ENCODE measurements at regions of chr20 and their contacts with region 1.

Region 1: DNA sequence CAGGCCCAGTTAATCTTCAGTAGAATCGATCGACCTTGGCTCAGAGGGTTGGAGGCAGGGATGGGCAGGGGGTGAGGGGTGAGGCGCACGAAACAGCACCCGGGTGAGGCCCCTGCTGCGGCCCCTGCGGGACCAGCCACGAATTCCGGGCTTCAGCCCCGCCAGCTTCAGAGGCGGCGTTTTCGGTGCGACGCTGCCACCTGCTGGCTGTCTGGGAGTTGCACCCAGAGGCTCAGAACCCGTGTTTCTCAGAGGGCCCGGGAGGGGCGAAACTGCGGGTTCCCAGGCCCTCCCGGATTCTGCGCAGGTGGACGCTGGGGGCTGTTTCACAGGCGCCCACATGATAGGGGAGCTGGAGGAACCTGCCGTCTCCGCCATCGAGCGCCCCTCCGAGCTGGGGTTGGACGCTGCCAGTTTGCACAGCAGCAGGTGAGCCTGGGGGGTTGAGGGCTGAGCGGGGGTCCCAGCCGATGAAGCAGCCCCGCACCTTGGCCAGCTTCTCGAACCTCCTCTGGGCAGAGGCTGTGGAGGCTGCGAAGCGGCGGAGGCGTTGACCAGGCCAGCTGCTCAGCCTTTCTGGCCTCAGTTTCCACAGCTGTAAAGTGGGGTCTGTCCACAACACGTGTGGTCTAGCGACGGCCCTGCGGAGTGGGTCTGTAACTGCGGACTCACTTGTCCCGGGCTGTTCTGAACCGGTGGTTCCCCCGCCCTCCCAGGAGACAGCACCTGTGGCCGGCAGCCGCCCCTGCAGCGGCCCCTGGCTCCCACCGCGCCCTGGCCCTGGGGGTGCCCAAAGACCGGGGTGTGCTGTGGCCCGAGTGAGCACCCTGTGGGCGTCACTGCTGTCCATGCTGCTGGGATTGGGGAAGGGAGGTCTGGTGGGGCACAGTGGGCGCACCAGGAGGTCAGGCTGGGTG is 2.5 kb upstream of the BHLHE23 start:
- DNase-seq: peak; percentile 95
- H3K4me3 Mint-ChIP-seq: peak overlapping the region; percentile 53
- H3K27ac Mint-ChIP-seq: peak overlapping the region; percentile 51
- H3K4me1 Mint-ChIP-seq: peaks cover 7% of the 10 kb centered on the region
- H3K27me3 Mint-ChIP-seq: peaks cover 67% of the 10 kb centered on the region

Region 2: DNA sequence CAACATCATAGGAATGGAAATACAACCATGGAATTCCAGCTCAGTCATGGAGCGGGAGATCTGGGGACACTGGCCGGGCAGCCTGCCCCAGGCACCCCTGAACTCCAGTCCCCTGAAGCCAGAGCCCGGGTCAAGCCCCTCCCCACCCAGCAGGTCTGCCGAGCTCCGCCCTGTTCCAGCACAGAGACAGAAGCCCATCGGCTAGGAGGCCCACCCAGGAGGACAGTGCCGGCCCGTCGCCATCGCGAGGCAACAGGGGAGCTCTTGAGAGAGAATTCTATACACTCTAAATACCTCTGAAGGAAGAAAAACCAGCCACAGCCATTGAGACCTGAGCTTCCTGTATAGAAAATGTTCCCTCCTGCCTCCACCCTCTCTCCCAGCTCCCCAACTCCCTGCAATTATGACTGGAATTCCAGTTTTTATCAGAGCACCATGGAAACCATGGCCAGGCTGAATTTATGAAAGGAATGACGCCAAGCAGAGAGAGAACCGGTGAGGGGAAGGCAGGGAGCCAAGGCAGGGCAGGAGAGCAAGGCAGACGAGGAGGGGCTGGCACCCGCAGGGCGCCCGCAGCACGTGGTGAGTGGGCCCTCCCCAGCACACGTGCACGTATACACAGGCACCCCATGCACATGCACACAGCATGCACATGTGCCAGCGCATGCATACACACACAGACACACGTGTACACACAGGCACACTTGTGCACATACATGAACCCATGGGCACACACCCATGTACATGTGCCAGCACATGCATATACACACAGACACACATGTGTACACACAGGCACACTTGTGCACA is 240.6 kb before region 1 on chr20:
- intact Hi-C with region 1: no loop called
- DNase-seq: no peak
- H3K4me3 Mint-ChIP-seq: no peak overlapping the region
- H3K27ac Mint-ChIP-seq: no peak overlapping the region
- H3K4me1 Mint-ChIP-seq: no peaks in the 10 kb centered on the region
- H3K27me3 Mint-ChIP-seq: peaks cover 2% of the 10 kb centered on the region

Region 3: DNA sequence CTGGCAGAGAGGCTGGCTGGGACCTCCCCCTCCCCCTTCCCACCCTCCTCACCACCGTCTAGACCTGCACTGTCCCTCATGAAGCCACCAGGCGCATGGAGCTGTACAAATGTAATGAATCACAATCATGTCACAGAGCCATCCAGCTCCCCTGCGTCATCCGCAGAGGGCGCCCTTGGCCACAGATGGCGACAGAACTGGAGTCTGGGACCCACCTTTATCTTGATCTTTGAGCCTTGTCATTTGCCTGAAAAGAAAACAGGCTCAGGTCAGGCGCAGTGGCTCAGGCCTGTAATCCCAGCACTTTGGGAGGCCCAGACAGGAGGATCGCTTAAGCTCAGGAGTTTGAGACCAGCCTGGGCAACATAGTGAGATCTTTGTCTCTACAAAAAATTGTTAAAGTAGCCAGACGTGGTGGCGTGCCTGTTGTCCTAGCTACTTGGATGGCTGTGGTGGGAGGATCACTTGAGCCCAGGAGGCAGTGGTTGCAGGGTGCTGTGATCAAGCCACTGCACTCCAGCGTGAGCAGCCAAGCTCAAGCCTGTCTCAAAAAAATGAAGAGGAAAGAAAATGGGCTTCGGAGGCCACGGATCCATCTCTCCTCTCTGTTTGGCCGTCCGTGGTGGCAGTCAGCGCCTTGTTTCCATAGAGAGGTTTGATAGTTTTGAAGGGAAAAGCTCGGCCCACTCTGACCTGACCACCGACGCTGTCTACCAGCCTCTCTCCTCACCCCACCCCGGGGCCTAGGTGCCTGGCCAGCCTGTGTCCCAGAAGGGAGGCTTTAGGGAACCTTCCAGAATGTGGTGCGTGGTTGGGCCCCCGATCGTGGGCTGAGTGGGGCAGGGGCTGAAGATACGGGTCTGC is 186.3 kb before region 1 on chr20:
- intact Hi-C with region 1: loop called (anchors 5 kb)
- DNase-seq: peak; percentile 84
- H3K4me3 Mint-ChIP-seq: no peak overlapping the region
- H3K27ac Mint-ChIP-seq: no peak overlapping the region
- H3K4me1 Mint-ChIP-seq: no peaks in the 10 kb centered on the region
- H3K27me3 Mint-ChIP-seq: peaks cover 4% of the 10 kb centered on the region

Region 4: GRCh38 chr20:62873280-62873679 is 136.0 kb before region 1 on chr20:
- intact Hi-C with region 1: loop called (anchors 1 kb)
- DNase-seq: no peak
- H3K4me3 Mint-ChIP-seq: no peak overlapping the region
- H3K27ac Mint-ChIP-seq: no peak overlapping the region
- H3K4me1 Mint-ChIP-seq: peaks cover 17% of the 10 kb centered on the region
- H3K27me3 Mint-ChIP-seq: no peaks in the 10 kb centered on the region

Region 5: GRCh38 chr20:62888910-62889309 is 120.4 kb before region 1 on chr20:
- intact Hi-C with region 1: no loop called
- DNase-seq: no peak
- H3K4me3 Mint-ChIP-seq: no peak overlapping the region
- H3K27ac Mint-ChIP-seq: no peak overlapping the region
- H3K4me1 Mint-ChIP-seq: peaks cover 22% of the 10 kb centered on the region
- H3K27me3 Mint-ChIP-seq: no peaks in the 10 kb centered on the region

Region 6: GRCh38 chr20:62900052-62900691 is 109.1 kb before region 1 on chr20:
- intact Hi-C with region 1: loop called (anchors 1 kb)
- DNase-seq: peak; percentile 92
- H3K4me3 Mint-ChIP-seq: peak overlapping the region; percentile 67
- H3K27ac Mint-ChIP-seq: peak overlapping the region; percentile 78
- H3K4me1 Mint-ChIP-seq: peaks cover 30% of the 10 kb centered on the region
- H3K27me3 Mint-ChIP-seq: no peaks in the 10 kb centered on the region

Region 7: GRCh38 chr20:62972270-62973032 is 36.9 kb before region 1 on chr20:
- intact Hi-C with region 1: loop called (anchors 1 kb)
- DNase-seq: peak; percentile 96
- H3K4me3 Mint-ChIP-seq: peak overlapping the region; percentile 56
- H3K27ac Mint-ChIP-seq: peak overlapping the region; percentile 29
- H3K4me1 Mint-ChIP-seq: peaks cover 20% of the 10 kb centered on the region
- H3K27me3 Mint-ChIP-seq: peaks cover 43% of the 10 kb centered on the region

Region 8: DNA sequence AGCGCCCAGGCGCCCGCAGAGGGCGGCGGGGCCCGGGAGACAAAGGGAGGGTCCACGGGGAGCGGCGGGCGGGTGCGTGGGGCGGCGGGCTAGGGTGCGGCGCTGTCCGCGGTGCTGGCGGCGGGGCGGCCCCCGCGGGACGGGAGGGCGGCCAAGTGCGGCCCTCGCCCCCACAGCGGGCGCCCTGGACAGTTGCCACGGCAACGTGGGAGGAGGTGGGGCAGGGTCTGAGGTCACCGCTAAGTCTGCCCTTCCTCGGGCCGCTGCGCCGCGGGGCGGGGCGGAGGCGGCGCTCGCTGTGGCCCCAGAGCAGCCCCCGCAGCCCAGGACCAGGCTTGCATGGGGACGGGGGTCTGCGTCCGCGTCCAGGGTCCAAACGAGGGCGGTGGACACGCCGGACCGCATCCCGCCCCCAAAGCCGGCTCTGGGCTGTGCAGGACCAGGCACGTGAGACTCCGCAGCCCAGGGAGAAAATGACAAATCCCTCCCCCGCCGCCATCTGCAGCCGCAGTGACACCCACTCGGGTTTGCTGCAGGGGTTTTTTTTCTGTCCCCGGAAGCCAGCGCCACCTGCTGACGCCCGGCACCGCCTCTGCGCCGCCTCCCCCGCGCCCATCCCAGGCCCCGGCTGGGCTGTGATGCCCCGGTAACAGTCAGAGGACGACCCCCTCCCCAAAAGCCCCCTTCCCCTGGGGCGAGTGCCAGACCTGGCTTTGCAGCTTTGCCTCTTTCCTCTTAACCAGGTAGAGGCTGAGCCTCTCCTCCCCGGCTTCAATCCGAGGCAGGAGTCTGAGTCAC is 169.8 kb after region 1 on chr20:
- intact Hi-C with region 1: loop called (anchors 5 kb)
- DNase-seq: peak; percentile 84
- H3K4me3 Mint-ChIP-seq: peak overlapping the region; percentile 59
- H3K27ac Mint-ChIP-seq: peak overlapping the region; percentile 41
- H3K4me1 Mint-ChIP-seq: peaks cover 9% of the 10 kb centered on the region
- H3K27me3 Mint-ChIP-seq: peaks cover 39% of the 10 kb centered on the region

Measured in activated CD4-positive, alpha-beta T cell treated with anti-CD3 and anti-CD28 coated beads, Interleukin-2, amount 10 ng/mL, durations not matched to agents 24 days and 14 days (primary cell).